Activated CD4-positive, alpha-beta memory T cell treated with anti-CD3 and anti-CD28 coated beads for 36 hours (primary cell): ENCODE measurements at regions of chr1 and their contacts with region 1.

Region 1: DNA sequence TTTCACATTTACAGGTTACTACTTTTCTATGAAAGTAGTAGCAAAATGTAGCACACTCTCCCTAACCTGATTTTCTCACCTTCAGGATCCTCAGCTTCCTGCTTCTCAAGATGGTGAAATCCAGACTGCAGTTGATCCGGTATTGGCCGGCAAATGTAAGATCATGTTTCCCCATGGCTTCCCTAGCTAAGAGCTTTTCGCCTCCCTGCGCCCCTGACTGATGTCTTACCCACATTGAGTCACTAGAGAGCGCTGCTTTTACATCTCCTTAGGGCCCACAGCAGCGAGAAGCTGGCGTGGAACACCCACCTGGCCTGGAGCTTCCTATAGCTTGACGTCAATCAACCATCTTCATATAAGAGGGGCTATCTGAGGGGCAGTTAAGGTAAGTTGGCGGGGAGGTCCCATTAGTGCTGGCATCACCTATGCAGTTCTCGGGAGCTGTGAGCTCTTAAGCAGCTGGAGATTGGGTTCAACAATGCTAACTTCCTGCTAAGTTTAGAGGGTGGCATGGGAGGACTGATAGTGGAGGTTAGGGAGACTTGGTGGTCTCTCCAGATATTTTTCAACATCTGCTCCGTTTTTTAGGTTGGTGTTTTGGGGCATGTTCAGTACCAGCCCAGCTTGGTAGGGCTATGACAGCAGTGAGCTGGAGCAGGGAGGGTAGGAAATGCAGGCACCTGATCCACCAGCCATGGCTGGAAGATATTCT is 5.5 kb downstream of the PTPN7 start:
- DNase-seq: peak; percentile 65
- H3K4me3 Mint-ChIP-seq: no peak overlapping the region
- H3K27ac Mint-ChIP-seq: peak overlapping the region; percentile 75
- H3K4me1 Mint-ChIP-seq: peaks cover 51% of the 10 kb centered on the region
- H3K27me3 Mint-ChIP-seq: no peaks in the 10 kb centered on the region

Region 2: GRCh38 chr1:202135221-202135721 is 19.7 kb before region 1 on chr1:
- CTCF ChIA-PET with region 1: interaction called, 14 read pairs
- POLR2A ChIA-PET with region 1: no interaction called
- intact Hi-C with region 1: no loop called
- DNase-seq: peak; percentile 62
- H3K4me3 Mint-ChIP-seq: no peak overlapping the region
- H3K27ac Mint-ChIP-seq: no peak overlapping the region
- H3K4me1 Mint-ChIP-seq: no peaks in the 10 kb centered on the region
- H3K27me3 Mint-ChIP-seq: no peaks in the 10 kb centered on the region

Region 3: GRCh38 chr1:202144402-202145067 is 10.4 kb before region 1 on chr1 and contains the start of gene ARL8A:
- CTCF ChIA-PET with region 1: interaction called, 21 read pairs
- POLR2A ChIA-PET with region 1: interaction called, 57 read pairs
- intact Hi-C with region 1: loop called (anchors 1 kb)
- DNase-seq: peak; percentile 77
- H3K4me3 Mint-ChIP-seq: peak within 1 kb of the TSS; percentile 89
- H3K27ac Mint-ChIP-seq: peak within 1 kb of the TSS; percentile 80
- H3K4me1 Mint-ChIP-seq: peaks cover 33% of the 10 kb centered on the region
- H3K27me3 Mint-ChIP-seq: no peaks in the 10 kb centered on the region
- total RNA-seq, gene ARL8A: 38.2 to 40.4 TPM

Region 4: DNA sequence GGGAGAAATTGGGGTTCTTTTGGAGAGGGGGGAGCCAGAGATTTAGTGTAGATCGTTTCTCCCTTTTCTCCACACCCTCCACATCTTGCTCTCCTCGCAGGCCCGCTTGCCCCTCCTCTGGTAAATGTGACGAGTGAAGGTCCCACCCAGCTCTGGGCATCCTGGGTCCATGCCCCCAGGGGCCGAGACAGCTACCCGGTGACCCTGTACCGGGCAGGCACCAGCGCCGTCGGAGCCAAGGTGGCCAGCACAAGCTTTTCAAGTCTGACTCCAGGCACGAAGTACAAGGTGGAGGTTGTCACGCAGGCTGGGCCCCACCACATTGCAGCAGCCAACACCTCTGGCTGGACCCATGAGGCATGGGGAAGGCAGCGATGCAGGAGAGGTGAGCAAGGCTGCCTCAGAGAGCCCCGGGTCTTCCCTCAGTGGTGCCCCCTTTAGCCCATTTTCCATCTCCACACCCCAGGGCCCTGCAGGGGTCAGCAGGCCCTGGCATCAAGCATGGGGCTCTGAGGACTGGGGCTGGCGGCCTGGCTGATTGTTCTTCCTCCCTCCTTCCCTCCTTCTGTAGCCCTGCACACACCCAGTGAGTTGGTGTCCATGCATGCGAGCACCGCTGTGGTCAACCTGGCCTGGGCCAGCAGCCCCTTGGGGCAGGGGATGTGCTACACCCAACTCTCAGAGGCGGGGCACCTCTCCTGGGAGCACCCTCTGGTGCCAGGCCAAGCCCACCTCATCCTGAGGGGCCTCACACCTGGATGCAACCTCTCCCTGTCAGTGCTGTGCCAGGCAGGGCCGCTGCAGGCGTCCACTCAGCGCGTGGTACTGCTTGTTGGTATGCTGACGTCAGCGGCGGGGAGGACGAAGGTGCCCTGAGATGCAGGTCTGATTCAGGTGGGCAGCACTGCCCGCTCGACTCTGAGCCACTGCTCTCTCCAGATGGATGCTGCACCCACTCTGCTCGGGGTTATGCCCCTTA is 22.3 kb after region 1 on chr1:
- CTCF ChIA-PET with region 1: interaction called, 13 read pairs
- POLR2A ChIA-PET with region 1: interaction called, 5 read pairs
- intact Hi-C with region 1: no loop called
- DNase-seq: no peak
- H3K4me3 Mint-ChIP-seq: no peak overlapping the region
- H3K27ac Mint-ChIP-seq: no peak overlapping the region
- H3K4me1 Mint-ChIP-seq: no peaks in the 10 kb centered on the region
- H3K27me3 Mint-ChIP-seq: no peaks in the 10 kb centered on the region

Region 5: DNA sequence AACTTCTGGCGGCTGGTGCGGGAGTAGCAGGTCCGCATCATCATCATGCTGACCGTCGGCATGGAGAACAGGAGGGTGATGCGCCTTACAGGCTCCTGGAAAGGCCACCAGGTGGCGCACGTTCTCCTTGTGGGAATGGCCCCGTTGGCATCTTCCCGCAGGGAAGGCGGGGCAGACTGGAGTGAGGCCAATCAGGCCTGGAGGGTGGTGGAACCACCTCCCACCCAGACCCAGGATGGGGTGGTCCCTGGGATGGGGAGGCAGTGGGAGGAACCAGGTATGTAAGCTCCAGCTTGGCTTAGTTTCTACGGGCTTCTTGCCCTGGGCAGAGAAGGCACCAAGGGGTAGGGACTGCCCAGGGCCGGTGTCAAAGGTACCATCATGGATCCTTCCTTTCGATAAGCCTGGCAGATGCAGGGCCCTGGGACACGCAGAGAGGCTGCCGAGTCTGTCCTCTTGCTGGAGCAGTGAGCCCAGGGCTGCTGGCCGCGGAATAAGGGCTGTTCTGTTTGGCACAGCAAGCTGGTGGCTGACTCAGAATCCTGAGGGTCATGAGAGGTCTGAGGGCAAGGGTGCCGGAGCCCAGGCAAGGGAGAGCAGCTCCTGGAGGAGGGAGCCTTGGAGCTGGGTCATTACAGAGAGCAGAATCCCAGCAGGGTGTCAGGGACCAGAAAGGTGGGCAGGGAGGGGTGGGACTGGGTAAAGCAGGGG is 30.0 kb after region 1 on chr1:
- CTCF ChIA-PET with region 1: interaction called, 50 read pairs
- POLR2A ChIA-PET with region 1: interaction called, 3 read pairs
- intact Hi-C with region 1: no loop called
- DNase-seq: peak; percentile 84
- H3K4me3 Mint-ChIP-seq: no peak overlapping the region
- H3K27ac Mint-ChIP-seq: no peak overlapping the region
- H3K4me1 Mint-ChIP-seq: peaks cover 8% of the 10 kb centered on the region
- H3K27me3 Mint-ChIP-seq: no peaks in the 10 kb centered on the region

Region 6: DNA sequence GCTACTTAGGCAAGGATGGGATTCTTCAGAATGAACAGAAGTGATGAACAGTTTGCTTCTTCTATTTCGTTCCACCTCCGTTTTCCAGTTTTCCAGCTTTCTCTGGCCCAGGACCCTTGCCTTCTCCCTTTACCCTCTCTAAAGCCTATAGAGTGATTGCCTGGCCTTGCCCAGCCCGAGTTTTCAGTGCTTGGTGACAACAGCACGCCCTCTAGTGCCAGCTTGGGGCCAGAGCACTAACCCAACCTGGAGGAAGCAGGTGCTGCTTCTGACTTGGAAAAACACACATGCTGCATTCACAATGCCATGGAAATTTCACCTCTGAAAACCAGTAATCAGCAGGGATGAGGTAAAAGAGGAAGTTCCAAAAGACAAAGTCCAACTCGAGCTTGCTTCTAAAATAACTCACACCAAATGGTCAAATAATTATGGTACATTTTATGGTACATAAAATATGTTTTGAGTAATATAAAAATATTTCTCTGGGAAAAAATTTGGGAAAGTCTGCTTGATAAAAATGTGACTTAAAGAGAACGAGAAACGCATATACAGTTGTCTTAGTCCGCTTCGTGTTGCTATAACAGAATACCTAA is 160.8 kb after region 1 on chr1:
- CTCF ChIA-PET with region 1: interaction called, 19 read pairs
- POLR2A ChIA-PET with region 1: no interaction called
- intact Hi-C with region 1: no loop called
- DNase-seq: peak; percentile 84
- H3K4me3 Mint-ChIP-seq: no peak overlapping the region
- H3K27ac Mint-ChIP-seq: no peak overlapping the region
- H3K4me1 Mint-ChIP-seq: peaks cover 5% of the 10 kb centered on the region
- H3K27me3 Mint-ChIP-seq: peaks cover 4% of the 10 kb centered on the region